ENCODE measurements at regions of chr14 and their contacts with region 1.

Region 1: GRCh38 chr14:24146978-24147760 is at the start of gene RNF31:
- DNase-seq: peak; percentile 99
- ATAC-seq: peak; percentile 89
- H3K4me3 Mint-ChIP-seq: peak within 1 kb of the TSS; percentile 94
- H3K27ac Mint-ChIP-seq: peak within 1 kb of the TSS; percentile 97
- H3K4me1 Mint-ChIP-seq: peaks cover 57% of the 10 kb centered on the region
- H3K27me3 Mint-ChIP-seq: no peaks in the 10 kb centered on the region
- total RNA-seq, gene RNF31: 73.7 to 98.4 TPM

Region 2: GRCh38 chr14:24108336-24108874 is 38.8 kb before region 1 on chr14:
- CTCF ChIA-PET with region 1: interaction called, 21 read pairs
- POLR2A ChIA-PET with region 1: interaction called, 19 read pairs
- intact Hi-C with region 1: no loop called
- DNase-seq: no peak
- ATAC-seq: no peak
- H3K4me3 Mint-ChIP-seq: peak overlapping the region; percentile 7
- H3K27ac Mint-ChIP-seq: peak overlapping the region; percentile 94
- H3K4me1 Mint-ChIP-seq: peaks cover 24% of the 10 kb centered on the region
- H3K27me3 Mint-ChIP-seq: no peaks in the 10 kb centered on the region

Region 3: DNA sequence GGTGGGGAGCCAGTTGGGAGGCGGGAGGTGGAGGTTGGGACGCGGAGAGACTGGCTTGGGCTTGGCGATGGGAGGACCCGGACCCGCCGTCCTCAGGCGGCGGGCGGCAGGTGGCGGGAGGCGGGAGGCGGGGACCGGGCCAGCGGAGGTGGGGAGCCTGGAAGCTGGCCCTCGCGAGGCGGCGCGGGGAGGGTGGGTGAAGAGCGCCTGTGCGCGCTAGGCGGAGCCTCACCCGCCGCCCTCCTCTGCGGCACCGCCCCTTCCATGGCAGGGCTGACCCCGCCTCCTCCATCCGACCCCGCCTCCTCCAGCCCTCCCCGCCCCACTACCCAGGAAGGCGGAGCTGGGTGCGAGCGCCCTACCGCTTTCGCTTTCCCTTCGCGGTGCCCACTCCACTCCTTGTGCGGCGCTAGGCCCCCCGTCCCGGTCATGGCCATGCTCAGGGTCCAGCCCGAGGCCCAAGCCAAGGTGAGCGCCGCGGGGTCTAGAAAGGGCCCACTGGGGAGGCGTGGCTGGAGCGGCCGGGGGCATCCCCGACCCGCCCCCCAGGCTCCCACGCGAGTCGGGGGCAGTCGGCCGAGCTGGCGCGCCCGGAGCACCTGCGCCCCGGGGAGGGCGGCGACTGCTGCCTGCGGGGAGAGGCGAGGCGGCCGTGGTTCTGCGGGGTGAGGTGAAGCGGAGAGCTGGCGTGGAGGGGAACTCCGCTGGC is 11.2 kb before region 1 on chr14 and contains the start of gene PSME1:
- CTCF ChIA-PET with region 1: interaction called, 11 read pairs
- POLR2A ChIA-PET with region 1: interaction called, 24 read pairs
- intact Hi-C with region 1: loop called (anchors 1 kb)
- DNase-seq: peak; percentile 98
- ATAC-seq: peak; percentile 95
- H3K4me3 Mint-ChIP-seq: peak within 1 kb of the TSS; percentile 92
- H3K27ac Mint-ChIP-seq: peak within 1 kb of the TSS; percentile 92
- H3K4me1 Mint-ChIP-seq: peaks cover 50% of the 10 kb centered on the region
- H3K27me3 Mint-ChIP-seq: no peaks in the 10 kb centered on the region
- total RNA-seq, gene PSME1: 414 to 418 TPM

Region 4: GRCh38 chr14:24188251-24189058 is 41.3 kb after region 1 on chr14 and contains the start of gene IPO4:
- CTCF ChIA-PET with region 1: interaction called, 3 read pairs
- POLR2A ChIA-PET with region 1: no interaction called
- intact Hi-C with region 1: loop called (anchors 1 kb)
- DNase-seq: peak; percentile 97
- ATAC-seq: peak; percentile 92
- H3K4me3 Mint-ChIP-seq: peak within 1 kb of the TSS; percentile 89
- H3K27ac Mint-ChIP-seq: peak within 1 kb of the TSS; percentile 83
- H3K4me1 Mint-ChIP-seq: peaks cover 40% of the 10 kb centered on the region
- H3K27me3 Mint-ChIP-seq: no peaks in the 10 kb centered on the region
- total RNA-seq, gene IPO4: 73.4 to 73.7 TPM

Region 5: GRCh38 chr14:24195191-24196070 is 48.3 kb after region 1 on chr14 and contains the start of gene TM9SF1:
- CTCF ChIA-PET with region 1: interaction called, 4 read pairs
- POLR2A ChIA-PET with region 1: interaction called, 5 read pairs
- intact Hi-C with region 1: loop called in 1 of 2 experiments (anchors 1 kb)
- DNase-seq: peak; percentile 93
- ATAC-seq: peak; percentile 93
- H3K4me3 Mint-ChIP-seq: peak within 1 kb of the TSS; percentile 90
- H3K27ac Mint-ChIP-seq: peak within 1 kb of the TSS; percentile 93
- H3K4me1 Mint-ChIP-seq: peaks cover 50% of the 10 kb centered on the region
- H3K27me3 Mint-ChIP-seq: no peaks in the 10 kb centered on the region
- total RNA-seq, gene TM9SF1: 17.0 to 24.4 TPM

Region 6: DNA sequence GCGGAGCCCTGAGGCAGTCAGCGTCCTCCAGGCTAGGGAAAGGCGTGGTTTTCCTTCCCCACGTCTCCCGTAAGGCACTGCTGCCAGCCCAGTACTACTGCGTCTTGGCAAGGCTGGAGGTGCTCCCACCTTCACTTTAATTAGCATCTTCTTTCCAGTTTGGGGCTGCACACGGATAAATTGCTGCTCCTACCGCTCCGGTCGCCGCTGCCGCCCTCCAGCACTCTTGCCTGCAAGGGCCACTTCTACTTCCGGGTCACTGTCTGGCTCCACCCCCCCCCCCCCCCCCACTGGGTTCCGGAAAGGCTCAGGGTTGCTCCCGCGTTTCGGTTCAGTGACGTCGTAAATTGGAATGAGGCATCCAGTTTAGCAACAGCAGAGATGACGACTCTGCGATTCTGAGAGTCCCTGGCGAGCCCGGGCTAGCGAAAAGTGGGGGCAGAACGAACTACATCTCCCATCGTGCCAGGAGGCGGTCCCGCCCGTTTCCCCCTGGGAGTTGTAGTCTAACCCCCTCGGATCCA is 85.0 kb after region 1 on chr14 and contains the start of gene NEDD8:
- CTCF ChIA-PET with region 1: interaction called, 3 read pairs
- POLR2A ChIA-PET with region 1: no interaction called
- intact Hi-C with region 1: loop called in 1 of 2 experiments (anchors 2 kb)
- DNase-seq: peak; percentile 96
- ATAC-seq: peak; percentile 91
- H3K4me3 Mint-ChIP-seq: peak within 1 kb of the TSS; percentile 78
- H3K27ac Mint-ChIP-seq: peak within 1 kb of the TSS; percentile 89
- H3K4me1 Mint-ChIP-seq: peaks cover 58% of the 10 kb centered on the region
- H3K27me3 Mint-ChIP-seq: no peaks in the 10 kb centered on the region
- total RNA-seq, gene NEDD8: 187 to 217 TPM

Region 7: DNA sequence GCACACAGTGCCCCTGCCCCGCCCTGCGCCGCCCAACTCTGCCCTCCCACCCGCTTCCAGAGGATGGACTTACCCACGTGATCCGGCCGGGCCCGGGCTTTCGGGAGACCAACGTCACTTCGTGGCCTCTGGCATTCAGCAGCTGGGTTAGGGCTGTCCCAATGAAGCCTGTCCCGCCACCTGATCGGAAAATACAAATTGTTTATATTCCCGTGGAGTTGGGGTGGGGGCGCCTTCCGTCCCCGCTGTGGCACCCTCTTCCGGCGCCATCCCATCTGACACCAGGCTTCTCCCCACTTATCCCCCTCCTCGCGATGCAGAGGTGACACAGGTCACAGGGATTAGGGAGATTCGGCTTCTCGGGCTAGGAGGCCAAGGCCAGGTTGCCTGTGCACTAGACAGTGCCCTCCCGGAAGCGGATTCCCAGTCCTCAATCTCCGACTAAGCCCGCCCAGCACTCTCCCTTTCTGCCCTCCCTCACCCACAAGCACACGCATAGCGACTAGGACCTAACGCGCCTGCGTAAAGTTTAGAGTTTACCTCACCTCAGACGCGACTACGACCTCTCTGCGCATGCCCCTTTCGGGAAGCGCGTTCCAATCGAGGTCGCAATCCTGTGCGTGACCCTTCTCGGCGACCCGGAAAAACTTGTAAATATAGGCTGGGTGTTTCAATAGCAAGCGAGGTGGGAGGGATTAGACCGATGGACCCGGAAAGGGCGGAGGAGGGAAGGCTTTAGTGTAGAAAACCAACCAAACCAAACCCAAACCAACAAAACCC is 295.3 kb after region 1 on chr14 and contains the start of gene SDR39U1:
- CTCF ChIA-PET with region 1: no interaction called
- POLR2A ChIA-PET with region 1: no interaction called
- intact Hi-C with region 1: loop called in 1 of 2 experiments (anchors 2 kb)
- DNase-seq: peak; percentile 98
- ATAC-seq: peak; percentile 92
- H3K4me3 Mint-ChIP-seq: peak within 1 kb of the TSS; percentile 97
- H3K27ac Mint-ChIP-seq: peak within 1 kb of the TSS; percentile 99
- H3K4me1 Mint-ChIP-seq: peaks cover 41% of the 10 kb centered on the region
- H3K27me3 Mint-ChIP-seq: no peaks in the 10 kb centered on the region
- total RNA-seq, gene SDR39U1: 40.9 to 47.8 TPM